Dorsolateral prefrontal cortex (tissue), 120 donors: ENCODE measurements at regions of chr4 and their contacts with region 1.

Region 1: GRCh38 chr4:112099701-112100297 is 45.5 kb upstream of the FAM241A start:
- DNase-seq: no peak
- H3K4me3 ChIP-seq: no peak overlapping the region
- H3K27ac ChIP-seq: no peak overlapping the region
- H3K27me3 ChIP-seq: no peaks in the 10 kb centered on the region
- CTCF ChIP-seq: peak; percentile 61 to 93 (median 78)

Region 2: GRCh38 chr4:112038861-112039260 is 60.9 kb before region 1 on chr4:
- intact Hi-C with region 1: no loop called
- DNase-seq: no peak
- H3K4me3 ChIP-seq: no peak overlapping the region
- H3K27ac ChIP-seq: no peak overlapping the region
- H3K27me3 ChIP-seq: peaks cover 0 to 24% (median 0%) of the 10 kb centered on the region in 45 donors
- CTCF ChIP-seq: no peak

Region 3: GRCh38 chr4:112145326-112145819 is 45.6 kb after region 1 on chr4 and contains the start of gene FAM241A:
- intact Hi-C with region 1: loop called in 1 of 2 experiments (anchors 5 kb)
- DNase-seq: peak; percentile 73 to 90 (median 82)
- H3K4me3 ChIP-seq: peak within 1 kb of the TSS; percentile 55 to 88 (median 77)
- H3K27ac ChIP-seq: peak within 1 kb of the TSS in 55 of 59 donors; percentile 14 to 92 (median 80)
- H3K27me3 ChIP-seq: no peaks in the 10 kb centered on the region
- CTCF ChIP-seq: peak in 5 of 56 donors; percentile 6 to 33 (median 18)
- total RNA-seq, gene FAM241A: 0.97 to 2.7 (median 1.8) TPM

Region 4: DNA sequence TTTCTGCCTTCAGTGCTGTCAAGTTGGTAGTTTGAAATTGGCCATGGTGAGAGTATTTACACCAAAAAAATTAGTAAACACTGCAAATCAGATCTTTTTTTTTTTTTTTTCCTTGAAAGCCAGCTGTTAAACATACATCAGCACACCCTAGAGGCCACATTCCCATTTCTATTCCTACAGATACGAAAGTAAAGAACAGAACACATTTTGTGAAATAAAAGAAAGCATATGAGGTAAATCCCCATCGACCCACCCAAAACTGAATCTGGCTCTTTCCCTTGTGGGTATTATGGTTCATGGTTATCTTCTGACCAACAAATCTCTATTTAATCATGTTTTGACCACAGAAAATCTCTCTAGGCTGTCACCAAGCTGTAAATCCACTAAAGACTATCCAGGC is 90.0 kb after region 1 on chr4:
- intact Hi-C with region 1: loop called (anchors 2 to 5 kb)
- DNase-seq: no peak
- H3K4me3 ChIP-seq: no peak overlapping the region
- H3K27ac ChIP-seq: peak overlapping the region in 3 of 59 donors; percentile 9 to 51 (median 27)
- H3K27me3 ChIP-seq: no peaks in the 10 kb centered on the region
- CTCF ChIP-seq: peak in 45 of 56 donors; percentile 10 to 72 (median 39)

Region 5: GRCh38 chr4:112231779-112232713 is 132.2 kb after region 1 on chr4 and contains the start of gene AP1AR:
- intact Hi-C with region 1: loop called (anchors 2 kb)
- DNase-seq: peak; percentile 59 to 88 (median 76)
- H3K4me3 ChIP-seq: peak within 1 kb of the TSS; percentile 65 to 99 (median 94)
- H3K27ac ChIP-seq: peak within 1 kb of the TSS; percentile 83 to 99 (median 95)
- H3K27me3 ChIP-seq: no peaks in the 10 kb centered on the region
- CTCF ChIP-seq: peak in 26 of 56 donors; percentile 0 to 47 (median 19)
- total RNA-seq, gene AP1AR: 10.1 to 30.2 (median 21.8) TPM

Region 6: GRCh38 chr4:112604589-112604988 is 504.8 kb after region 1 on chr4:
- intact Hi-C with region 1: loop called in 1 of 2 experiments (anchors 10 kb)
- DNase-seq: peak in 5 of 10 donors; percentile 14 to 68 (median 40)
- H3K4me3 ChIP-seq: no peak overlapping the region
- H3K27ac ChIP-seq: no peak overlapping the region
- H3K27me3 ChIP-seq: no peaks in the 10 kb centered on the region
- CTCF ChIP-seq: peak; percentile 42 to 87 (median 72)